ENCODE measurements at regions of chr19 and their contacts with region 1.

Region 1: GRCh38 chr19:38666663-38667511 is 19.4 kb downstream of the ACTN4 start:
- DNase-seq: peak; percentile 34 to 76 (median 63)
- H3K4me3 ChIP-seq: peak overlapping the region in 3 of 7 experiments; percentile 24 to 40 (median 27)
- H3K27ac ChIP-seq: peak overlapping the region; percentile 60 to 79
- H3K4me1 ChIP-seq: peaks cover 45 to 97% (median 94%) of the 10 kb centered on the region in 4 experiments
- H3K27me3 ChIP-seq: no peaks in the 10 kb centered on the region

Region 2: GRCh38 chr19:38685666-38686529 is 19.0 kb after region 1 on chr19:
- CTCF ChIA-PET with region 1: interaction called, 22 read pairs
- POLR2A ChIA-PET with region 1: interaction called, 4 read pairs
- DNase-seq: peak; percentile 54 to 75 (median 70)
- H3K4me3 ChIP-seq: peak overlapping the region in 1 of 7 experiments; percentile 25
- H3K27ac ChIP-seq: peak overlapping the region; percentile 18 to 87
- H3K4me1 ChIP-seq: peaks cover 11 to 97% (median 75%) of the 10 kb centered on the region in 4 experiments
- H3K27me3 ChIP-seq: no peaks in the 10 kb centered on the region